B cell (primary cell): ENCODE measurements at regions of chr9 and their contacts with region 1.

Region 1: GRCh38 chr9:131747356-131747755 is 7.5 kb upstream of the RAPGEF1 start:
- DNase-seq: peak; percentile 72
- ATAC-seq: peak; percentile 56
- H3K4me3 ChIP-seq: no peak overlapping the region
- H3K4me3 Mint-ChIP-seq: no peak overlapping the region
- H3K27ac ChIP-seq: no peak overlapping the region
- H3K27ac Mint-ChIP-seq: no peak overlapping the region
- H3K4me1 ChIP-seq: peaks cover 17 to 19% of the 10 kb centered on the region in 2 donors
- H3K4me1 Mint-ChIP-seq: peaks cover 32% of the 10 kb centered on the region
- H3K27me3 ChIP-seq: no peaks in the 10 kb centered on the region
- H3K27me3 Mint-ChIP-seq: no peaks in the 10 kb centered on the region
- CTCF ChIP-seq: peak; percentile 64

Region 2: GRCh38 chr9:131366761-131367401 is 380.5 kb before region 1 on chr9:
- CTCF ChIA-PET with region 1: no interaction called
- POLR2A ChIA-PET with region 1: no interaction called
- intact Hi-C with region 1: loop called (anchors 5 kb)
- DNase-seq: peak; percentile 24
- ATAC-seq: no peak
- H3K4me3 ChIP-seq: no peak overlapping the region
- H3K4me3 Mint-ChIP-seq: no peak overlapping the region
- H3K27ac ChIP-seq: no peak overlapping the region
- H3K27ac Mint-ChIP-seq: no peak overlapping the region
- H3K4me1 ChIP-seq: no peaks in the 10 kb centered on the region
- H3K4me1 Mint-ChIP-seq: peaks cover under 1% of the 10 kb centered on the region
- H3K27me3 ChIP-seq: no peaks in the 10 kb centered on the region
- H3K27me3 Mint-ChIP-seq: no peaks in the 10 kb centered on the region
- CTCF ChIP-seq: no peak

Region 3: GRCh38 chr9:131578731-131579504 is 168.4 kb before region 1 on chr9:
- CTCF ChIA-PET with region 1: interaction called, 19 read pairs
- POLR2A ChIA-PET with region 1: no interaction called
- intact Hi-C with region 1: no loop called
- DNase-seq: peak; percentile 85
- ATAC-seq: peak; percentile 86
- H3K4me3 ChIP-seq: peak overlapping the region in 3 of 5 experiments; percentile 14 to 31 (median 23)
- H3K4me3 Mint-ChIP-seq: peak overlapping the region; percentile 77
- H3K27ac ChIP-seq: peak overlapping the region; percentile 67 to 83
- H3K27ac Mint-ChIP-seq: peak overlapping the region; percentile 94
- H3K4me1 ChIP-seq: peaks cover 19 to 27% of the 10 kb centered on the region in 2 donors
- H3K4me1 Mint-ChIP-seq: peaks cover 24% of the 10 kb centered on the region
- H3K27me3 ChIP-seq: no peaks in the 10 kb centered on the region
- H3K27me3 Mint-ChIP-seq: no peaks in the 10 kb centered on the region
- CTCF ChIP-seq: no peak

Region 4: GRCh38 chr9:131590908-131591844 is 156.2 kb before region 1 on chr9:
- CTCF ChIA-PET with region 1: interaction called, 263 read pairs
- POLR2A ChIA-PET with region 1: interaction called, 4 read pairs
- intact Hi-C with region 1: loop called (anchors 1 kb)
- DNase-seq: peak; percentile 85
- ATAC-seq: peak; percentile 87
- H3K4me3 ChIP-seq: no peak overlapping the region
- H3K4me3 Mint-ChIP-seq: no peak overlapping the region
- H3K27ac ChIP-seq: no peak overlapping the region
- H3K27ac Mint-ChIP-seq: peak overlapping the region; percentile 82
- H3K4me1 ChIP-seq: peaks cover 0 to 13% of the 10 kb centered on the region in 2 donors
- H3K4me1 Mint-ChIP-seq: peaks cover 27% of the 10 kb centered on the region
- H3K27me3 ChIP-seq: no peaks in the 10 kb centered on the region
- H3K27me3 Mint-ChIP-seq: no peaks in the 10 kb centered on the region
- CTCF ChIP-seq: peak; percentile 83

Region 5: DNA sequence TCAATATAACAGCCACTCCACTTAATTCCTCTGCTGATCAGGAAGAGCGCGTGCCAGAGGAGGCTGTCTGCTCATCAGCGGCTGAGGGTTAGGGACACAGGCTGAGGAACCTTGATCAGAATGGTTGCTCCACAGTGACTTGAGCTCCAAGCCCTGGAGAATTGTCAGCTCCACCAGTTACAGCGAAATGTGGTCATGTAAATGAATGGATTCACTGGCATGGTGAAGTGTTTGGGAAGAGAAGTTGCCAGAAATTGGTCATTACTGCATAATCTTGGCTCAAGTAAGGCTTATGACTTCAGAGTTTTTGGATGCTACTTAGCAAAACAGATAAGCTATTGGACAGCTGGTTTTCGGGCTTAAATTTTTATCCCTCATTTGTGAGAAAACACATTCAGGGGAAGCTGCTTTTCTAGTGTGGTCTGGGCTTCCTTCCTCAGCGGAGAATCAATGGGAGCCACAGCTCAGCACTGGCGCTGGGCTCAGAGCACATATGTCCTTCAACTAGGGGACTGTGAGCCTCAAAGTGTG is 137.1 kb before region 1 on chr9:
- CTCF ChIA-PET with region 1: interaction called, 263 read pairs
- POLR2A ChIA-PET with region 1: interaction called, 6 read pairs
- intact Hi-C with region 1: no loop called
- DNase-seq: no peak
- ATAC-seq: no peak
- H3K4me3 ChIP-seq: no peak overlapping the region
- H3K4me3 Mint-ChIP-seq: no peak overlapping the region
- H3K27ac ChIP-seq: peak overlapping the region in 1 of 2 donors; percentile 14
- H3K27ac Mint-ChIP-seq: peak overlapping the region; percentile 59
- H3K4me1 ChIP-seq: no peaks in the 10 kb centered on the region
- H3K4me1 Mint-ChIP-seq: peaks cover 6% of the 10 kb centered on the region
- H3K27me3 ChIP-seq: no peaks in the 10 kb centered on the region
- H3K27me3 Mint-ChIP-seq: no peaks in the 10 kb centered on the region
- CTCF ChIP-seq: no peak

Region 6: DNA sequence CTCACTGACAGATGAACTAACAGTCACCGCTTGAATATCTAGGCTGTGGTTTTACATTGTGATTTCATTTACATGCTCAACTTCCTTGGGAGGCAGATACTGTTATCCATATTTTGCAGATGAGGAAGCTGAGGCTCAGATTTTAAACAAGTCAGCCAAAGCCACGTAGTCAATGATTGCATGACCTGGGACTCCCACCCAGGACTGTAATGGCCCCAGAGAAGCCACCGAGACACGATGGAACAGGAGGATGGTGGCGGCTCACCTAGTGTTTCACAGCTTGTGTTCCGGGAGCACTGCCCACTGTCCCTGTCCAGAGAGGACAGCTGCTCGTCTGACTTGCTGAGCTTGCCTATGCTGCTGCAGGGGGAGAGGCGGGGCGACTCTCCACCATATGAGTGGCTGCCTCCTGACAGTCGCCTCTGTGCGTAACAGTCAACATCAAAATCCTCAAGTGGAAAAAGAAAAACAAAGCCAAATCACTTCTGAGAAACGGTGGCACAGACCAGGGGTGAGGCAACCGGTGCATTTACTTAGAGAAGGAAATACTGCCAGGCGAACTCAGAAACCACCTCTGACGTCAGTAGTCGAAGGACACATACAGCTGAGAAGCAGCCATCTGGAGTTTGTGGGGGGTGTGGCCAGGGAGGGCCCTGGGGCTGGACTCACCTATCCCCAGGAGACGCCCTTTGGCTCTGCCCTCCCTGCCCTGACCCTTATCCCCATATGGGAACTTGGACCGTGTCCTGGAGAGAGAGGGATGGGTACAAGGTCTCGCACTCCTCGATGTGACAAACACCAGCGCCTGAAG is 119.5 kb before region 1 on chr9:
- CTCF ChIA-PET with region 1: interaction called, 88 read pairs
- POLR2A ChIA-PET with region 1: interaction called, 5 read pairs
- intact Hi-C with region 1: no loop called
- DNase-seq: peak; percentile 84
- ATAC-seq: peak; percentile 79
- H3K4me3 ChIP-seq: no peak overlapping the region
- H3K4me3 Mint-ChIP-seq: peak overlapping the region; percentile 89
- H3K27ac ChIP-seq: peak overlapping the region; percentile 83 to 85
- H3K27ac Mint-ChIP-seq: peak overlapping the region; percentile 94
- H3K4me1 ChIP-seq: peaks cover 24 to 52% of the 10 kb centered on the region in 2 donors
- H3K4me1 Mint-ChIP-seq: peaks cover 65% of the 10 kb centered on the region
- H3K27me3 ChIP-seq: no peaks in the 10 kb centered on the region
- H3K27me3 Mint-ChIP-seq: no peaks in the 10 kb centered on the region
- CTCF ChIP-seq: no peak

Region 7: GRCh38 chr9:131762356-131762932 is 15.1 kb after region 1 on chr9:
- CTCF ChIA-PET with region 1: interaction called, 14 read pairs
- POLR2A ChIA-PET with region 1: no interaction called
- intact Hi-C with region 1: no loop called
- DNase-seq: peak; percentile 82
- ATAC-seq: peak; percentile 99
- H3K4me3 ChIP-seq: no peak overlapping the region
- H3K4me3 Mint-ChIP-seq: no peak overlapping the region
- H3K27ac ChIP-seq: no peak overlapping the region
- H3K27ac Mint-ChIP-seq: no peak overlapping the region
- H3K4me1 ChIP-seq: peaks cover 6 to 8% of the 10 kb centered on the region in 2 donors
- H3K4me1 Mint-ChIP-seq: peaks cover 3% of the 10 kb centered on the region
- H3K27me3 ChIP-seq: peaks cover 0 to 15% (median 3%) of the 10 kb centered on the region in 4 experiments
- H3K27me3 Mint-ChIP-seq: peaks cover 11% of the 10 kb centered on the region
- CTCF ChIP-seq: peak; percentile 97

Region 8: DNA sequence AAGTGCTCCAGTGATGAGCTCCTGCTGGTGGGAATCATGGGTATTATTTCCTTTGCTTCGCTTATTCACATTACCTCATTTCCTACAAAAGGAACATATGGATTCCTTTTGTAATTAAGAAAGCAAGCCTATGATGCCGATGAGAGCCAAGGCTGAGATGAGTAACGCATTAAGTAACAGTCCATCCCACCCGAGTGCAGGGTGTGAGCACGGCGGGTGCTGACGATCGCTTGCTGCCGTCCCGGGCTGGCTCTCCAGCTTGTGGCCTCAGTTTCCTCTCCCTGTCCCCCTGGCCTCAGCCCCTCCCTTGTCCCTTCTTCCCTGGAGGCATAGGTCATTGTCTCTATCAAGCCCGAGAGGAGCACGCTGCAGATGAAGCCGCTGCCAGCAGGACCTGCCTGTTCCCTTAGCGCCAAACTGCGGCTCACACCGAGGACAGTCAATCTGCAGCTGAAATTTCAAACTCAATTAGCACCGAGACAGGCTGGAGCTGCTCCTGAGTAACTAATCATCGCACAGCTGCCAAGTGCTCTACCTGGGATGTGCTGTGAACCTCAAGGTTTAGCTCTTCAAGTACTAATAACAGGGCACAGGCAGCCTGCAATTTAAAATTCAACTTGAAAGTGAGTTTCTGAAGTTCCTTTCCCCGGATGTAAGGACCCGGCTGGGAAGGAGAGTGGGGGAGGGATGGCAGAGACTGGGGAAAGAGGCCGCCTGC is 107.7 kb after region 1 on chr9:
- CTCF ChIA-PET with region 1: no interaction called
- POLR2A ChIA-PET with region 1: no interaction called
- intact Hi-C with region 1: no loop called
- DNase-seq: no peak
- ATAC-seq: no peak
- H3K4me3 ChIP-seq: no peak overlapping the region
- H3K4me3 Mint-ChIP-seq: no peak overlapping the region
- H3K27ac ChIP-seq: no peak overlapping the region
- H3K27ac Mint-ChIP-seq: no peak overlapping the region
- H3K4me1 ChIP-seq: no peaks in the 10 kb centered on the region
- H3K4me1 Mint-ChIP-seq: no peaks in the 10 kb centered on the region
- H3K27me3 ChIP-seq: no peaks in the 10 kb centered on the region
- H3K27me3 Mint-ChIP-seq: no peaks in the 10 kb centered on the region
- CTCF ChIP-seq: no peak